Activated CD4-positive, alpha-beta T cell treated with anti-CD3 and anti-CD28 coated beads, Interleukin-2, amount 10 ng/mL, durations not matched to agents 24 days and 14 days (primary cell): ENCODE measurements at regions of chr2 and their contacts with region 1.

Region 1: GRCh38 chr2:199911052-199911876 is at the start of gene C2orf69:
- DNase-seq: peak; percentile 97
- H3K4me3 Mint-ChIP-seq: peak within 1 kb of the TSS; percentile 99
- H3K27ac Mint-ChIP-seq: peak within 1 kb of the TSS; percentile 97
- H3K4me1 Mint-ChIP-seq: peaks cover 31% of the 10 kb centered on the region
- H3K27me3 Mint-ChIP-seq: peaks cover 6% of the 10 kb centered on the region
- total RNA-seq, gene C2orf69: 17.1 and 17.4 TPM in 2 replicates

Region 2: DNA sequence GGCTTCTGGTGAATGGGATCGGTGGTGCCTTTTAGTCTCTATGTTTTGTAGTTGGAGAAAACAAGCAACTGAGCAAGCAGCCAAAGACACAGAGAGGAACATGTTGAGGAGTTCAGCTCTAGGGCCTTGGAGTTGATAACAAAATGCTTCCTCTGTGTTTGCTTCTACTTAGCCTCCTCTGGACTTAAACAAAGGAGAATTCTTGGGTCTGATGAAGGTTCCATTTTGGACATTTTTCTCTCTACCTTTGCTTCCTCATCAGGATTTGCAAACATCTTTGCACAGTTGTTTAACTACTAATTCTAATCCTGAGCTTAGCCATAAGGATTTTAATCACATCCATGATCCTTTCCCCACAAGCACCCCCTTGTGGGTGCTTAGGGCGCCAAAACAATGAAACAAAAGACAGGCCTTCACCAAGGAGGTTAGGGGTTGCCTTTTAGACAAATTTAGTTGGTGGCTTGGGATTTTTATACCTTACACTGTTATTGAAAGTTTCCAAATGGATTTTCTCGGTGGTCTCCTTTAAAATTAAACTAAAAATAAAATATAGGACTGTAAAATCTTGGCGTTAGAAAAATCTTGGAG is 305.0 kb before region 1 on chr2:
- intact Hi-C with region 1: no loop called
- DNase-seq: no peak
- H3K4me3 Mint-ChIP-seq: no peak overlapping the region
- H3K27ac Mint-ChIP-seq: no peak overlapping the region
- H3K4me1 Mint-ChIP-seq: peaks cover 5% of the 10 kb centered on the region
- H3K27me3 Mint-ChIP-seq: peaks cover 18% of the 10 kb centered on the region

Region 3: DNA sequence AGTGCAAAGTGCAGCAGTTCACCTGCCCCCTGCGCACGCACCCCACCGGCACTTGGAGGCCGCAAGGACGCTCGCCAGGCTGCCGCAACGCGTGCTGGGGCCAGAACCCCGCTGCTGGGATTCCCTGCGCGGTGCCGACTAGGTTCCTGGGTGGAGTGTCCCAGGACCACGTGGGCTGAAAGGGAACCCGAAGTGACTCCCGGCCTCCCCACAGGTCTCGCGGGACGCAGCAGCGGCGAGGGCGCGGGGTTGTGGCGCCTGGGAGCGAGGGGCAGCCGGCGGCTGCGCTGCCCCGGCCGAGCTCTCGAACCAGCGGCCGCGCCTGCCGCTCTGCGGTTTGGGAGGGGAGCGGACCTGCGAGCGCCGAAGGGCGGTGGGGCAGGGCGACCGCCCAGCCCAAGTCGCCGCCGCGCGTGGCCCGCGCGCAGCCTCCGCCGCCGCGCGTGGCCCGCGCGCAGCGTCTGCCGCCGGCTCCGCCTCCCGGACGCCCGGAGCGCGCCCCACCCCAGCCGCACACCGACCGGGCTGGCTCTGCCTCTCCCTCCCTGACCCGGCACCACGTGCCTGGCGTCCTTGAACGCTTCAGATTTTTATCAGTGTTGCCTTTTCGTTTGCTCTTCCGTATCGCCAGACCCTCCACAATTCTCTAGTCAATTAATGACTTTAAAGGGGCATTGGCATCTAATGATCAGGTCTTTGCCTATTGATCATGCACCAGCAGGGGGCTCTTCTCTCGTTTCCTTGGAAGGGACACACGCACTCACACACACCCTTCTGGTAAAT is 60.4 kb before region 1 on chr2 and contains the start of gene FTCDNL1:
- intact Hi-C with region 1: loop called (anchors 1 kb)
- DNase-seq: peak; percentile 93
- H3K4me3 Mint-ChIP-seq: peak within 1 kb of the TSS; percentile 92
- H3K27ac Mint-ChIP-seq: peak within 1 kb of the TSS; percentile 90
- H3K4me1 Mint-ChIP-seq: peaks cover 6% of the 10 kb centered on the region
- H3K27me3 Mint-ChIP-seq: peaks cover 9% of the 10 kb centered on the region
- total RNA-seq, gene FTCDNL1: 2.0 and 2.1 TPM in 2 replicates

Region 4: DNA sequence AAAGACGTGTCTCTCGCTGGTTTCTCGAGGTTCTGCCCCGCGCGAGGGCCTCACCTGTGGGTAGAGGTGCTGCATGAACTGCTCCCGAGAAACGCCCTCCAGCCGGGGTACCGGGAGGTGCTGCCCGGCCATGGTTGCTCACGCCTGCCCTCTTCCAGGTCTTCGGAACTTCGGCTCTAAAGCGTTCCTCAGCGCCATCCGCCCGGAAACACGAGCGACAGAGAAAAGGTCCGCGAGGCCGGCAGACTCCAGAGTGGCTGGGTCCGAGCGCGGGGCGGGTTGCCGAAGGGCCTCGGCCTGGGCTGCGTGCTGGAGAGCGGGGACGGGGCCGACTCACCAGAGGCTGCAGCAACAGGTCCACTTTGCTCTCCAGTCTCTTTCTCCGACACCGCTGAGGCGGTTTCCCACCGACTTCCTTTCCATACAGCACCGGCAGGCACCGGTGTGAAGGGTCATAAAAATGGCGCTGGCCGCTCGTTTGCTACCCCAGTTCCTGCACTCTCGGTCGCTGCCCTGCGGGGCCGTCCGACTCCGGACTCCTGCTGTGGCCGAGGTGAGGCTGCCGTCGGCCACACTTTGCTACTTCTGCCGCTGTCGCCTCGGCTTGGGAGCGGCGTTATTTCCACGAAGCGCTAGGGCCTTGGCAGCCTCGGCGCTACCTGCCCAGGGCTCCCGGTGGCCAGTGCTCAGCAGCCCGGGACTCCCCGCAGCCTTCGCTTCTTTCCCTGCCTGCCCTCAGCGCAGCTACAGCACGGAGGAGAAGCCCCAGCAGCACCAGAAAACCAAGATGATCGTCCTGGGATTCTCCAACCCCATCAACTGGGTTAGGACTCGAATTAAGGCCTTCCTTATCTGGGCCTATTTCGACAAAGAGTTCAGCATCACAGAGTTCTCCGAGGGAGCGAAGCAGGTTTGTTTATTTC is 44.3 kb after region 1 on chr2 and contains the starts of genes MAIP1 and TYW5:
- intact Hi-C with region 1: loop called (anchors 1 kb)
- DNase-seq: peak; percentile 94
- H3K4me3 Mint-ChIP-seq: peak within 1 kb of the TSS; percentile 98
- H3K27ac Mint-ChIP-seq: peak within 1 kb of the TSS; percentile 96
- H3K4me1 Mint-ChIP-seq: peaks cover 41% of the 10 kb centered on the region
- H3K27me3 Mint-ChIP-seq: no peaks in the 10 kb centered on the region
- total RNA-seq, gene MAIP1: 27.9 and 29.6 TPM in 2 replicates
- total RNA-seq, gene TYW5: 10.9 and 11.7 TPM in 2 replicates